ENCODE measurements at regions of chr18 and their contacts with region 1.

Region 1: GRCh38 chr18:48767090-48767690 is 183.6 kb downstream of the SMAD7 start:
- DNase-seq: peak; percentile 71 to 91
- ATAC-seq: peak; percentile 76 to 82
- H3K4me3 ChIP-seq: no peak overlapping the region
- H3K27ac ChIP-seq: peak overlapping the region; percentile 78 to 91 (median 88)
- H3K4me1 ChIP-seq: peaks cover 63 to 87% of the 10 kb centered on the region in 2 donors
- H3K27me3 ChIP-seq: no peaks in the 10 kb centered on the region
- CTCF ChIP-seq: no peak
- POLR2A ChIP-seq: peak; percentile 59 to 60

Region 2: DNA sequence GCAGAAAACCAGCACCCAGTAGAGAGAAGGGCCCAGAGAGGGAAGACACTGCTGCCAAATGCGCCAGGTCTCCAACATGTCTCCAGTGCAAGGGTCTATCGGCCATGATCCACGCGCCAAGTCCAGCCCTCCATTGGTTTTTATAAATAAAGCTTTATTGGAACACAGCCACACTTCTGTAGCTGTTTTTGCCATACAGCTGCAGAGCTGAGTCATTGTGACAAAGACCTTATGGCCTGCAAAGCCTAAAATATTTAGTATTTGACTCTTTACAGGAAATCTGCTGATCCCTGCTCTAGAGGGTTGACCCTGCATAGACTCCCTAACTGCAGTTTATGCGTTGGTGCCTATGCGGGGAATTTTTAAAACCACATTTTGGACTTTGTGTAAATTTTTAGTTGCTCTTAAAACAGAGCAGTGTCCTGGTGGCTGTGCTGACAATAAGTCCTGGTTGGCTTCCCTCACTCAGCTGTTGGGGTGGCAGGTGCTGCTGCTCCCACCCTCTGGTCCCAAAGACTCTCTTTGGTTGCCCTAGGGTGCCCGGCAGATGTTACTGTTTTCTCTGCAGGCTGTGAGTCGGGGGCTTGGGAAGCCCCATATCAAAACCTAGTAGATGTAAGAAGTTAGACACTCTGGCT is 73.4 kb before region 1 on chr18:
- in situ Hi-C with region 1: no loop called
- intact Hi-C with region 1: loop called (anchors 10 kb)
- DNase-seq: no peak
- ATAC-seq: peak; percentile 22 to 38
- H3K4me3 ChIP-seq: no peak overlapping the region
- H3K27ac ChIP-seq: peak overlapping the region; percentile 72 to 79 (median 74)
- H3K4me1 ChIP-seq: peaks cover 29 to 35% of the 10 kb centered on the region in 2 donors
- H3K27me3 ChIP-seq: no peaks in the 10 kb centered on the region
- CTCF ChIP-seq: no peak
- POLR2A ChIP-seq: no peak

Region 3: DNA sequence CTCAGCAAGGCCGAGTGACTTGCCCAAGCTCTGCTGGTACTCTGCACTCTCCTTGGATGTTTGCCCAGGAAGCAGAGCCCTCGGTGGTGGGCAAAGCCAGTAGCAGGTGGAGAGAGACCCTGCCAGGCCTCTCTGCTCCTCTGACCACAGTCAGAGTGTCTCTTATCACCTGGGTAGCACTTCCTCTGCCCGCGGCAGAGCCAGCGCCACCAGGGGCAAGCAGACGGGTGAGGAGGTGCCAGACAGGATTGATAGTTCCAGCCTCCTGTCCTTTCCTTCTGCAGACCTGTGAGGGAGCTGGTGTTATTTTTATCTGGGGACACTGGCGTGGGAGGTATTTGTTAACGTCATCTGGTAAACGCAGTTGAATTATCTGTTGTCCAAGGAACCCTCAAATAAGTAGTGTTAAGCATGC is 30.7 kb after region 1 on chr18:
- in situ Hi-C with region 1: no loop called
- intact Hi-C with region 1: loop called (anchors 2 kb)
- DNase-seq: peak; percentile 25 to 77
- ATAC-seq: peak; percentile 61 to 69
- H3K4me3 ChIP-seq: no peak overlapping the region
- H3K27ac ChIP-seq: peak overlapping the region; percentile 54 to 91 (median 80)
- H3K4me1 ChIP-seq: peaks cover 34 to 36% of the 10 kb centered on the region in 2 donors
- H3K27me3 ChIP-seq: no peaks in the 10 kb centered on the region
- CTCF ChIP-seq: no peak
- POLR2A ChIP-seq: peak in 1 of 2 donors; percentile 25

Region 4: DNA sequence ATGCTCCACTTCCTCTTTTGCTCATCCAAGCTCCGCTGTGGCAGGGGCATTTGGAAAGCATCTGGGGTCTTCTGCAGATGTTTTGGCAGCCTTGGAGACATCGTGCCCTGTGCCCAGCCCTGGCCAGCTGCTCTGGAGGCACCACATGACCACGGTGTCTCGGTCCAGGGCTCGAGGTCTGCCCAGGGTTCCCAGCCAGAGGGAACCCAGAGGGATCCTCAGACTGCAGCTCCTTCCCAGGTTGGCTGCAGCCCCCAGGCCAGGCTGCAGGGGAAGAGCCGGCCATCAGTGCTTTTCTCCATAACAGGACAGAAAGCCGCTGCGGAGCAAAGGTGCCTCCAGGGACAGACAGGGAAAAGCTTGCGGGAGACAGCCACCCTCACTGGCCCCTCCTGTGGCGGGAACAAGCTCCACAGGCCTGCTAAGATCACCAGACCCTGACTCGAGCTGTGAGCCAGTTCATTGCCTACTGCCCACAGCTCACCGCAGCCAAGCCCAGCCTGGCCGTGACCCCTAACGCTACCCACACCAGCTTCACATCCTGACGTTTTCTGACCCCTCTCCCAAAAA is 108.8 kb after region 1 on chr18:
- in situ Hi-C with region 1: no loop called
- intact Hi-C with region 1: no loop called
- DNase-seq: no peak
- ATAC-seq: no peak
- H3K4me3 ChIP-seq: no peak overlapping the region
- H3K27ac ChIP-seq: no peak overlapping the region
- H3K4me1 ChIP-seq: no peaks in the 10 kb centered on the region
- H3K27me3 ChIP-seq: no peaks in the 10 kb centered on the region
- CTCF ChIP-seq: peak in 1 of 5 experiments; percentile 12
- POLR2A ChIP-seq: no peak

Region 5: DNA sequence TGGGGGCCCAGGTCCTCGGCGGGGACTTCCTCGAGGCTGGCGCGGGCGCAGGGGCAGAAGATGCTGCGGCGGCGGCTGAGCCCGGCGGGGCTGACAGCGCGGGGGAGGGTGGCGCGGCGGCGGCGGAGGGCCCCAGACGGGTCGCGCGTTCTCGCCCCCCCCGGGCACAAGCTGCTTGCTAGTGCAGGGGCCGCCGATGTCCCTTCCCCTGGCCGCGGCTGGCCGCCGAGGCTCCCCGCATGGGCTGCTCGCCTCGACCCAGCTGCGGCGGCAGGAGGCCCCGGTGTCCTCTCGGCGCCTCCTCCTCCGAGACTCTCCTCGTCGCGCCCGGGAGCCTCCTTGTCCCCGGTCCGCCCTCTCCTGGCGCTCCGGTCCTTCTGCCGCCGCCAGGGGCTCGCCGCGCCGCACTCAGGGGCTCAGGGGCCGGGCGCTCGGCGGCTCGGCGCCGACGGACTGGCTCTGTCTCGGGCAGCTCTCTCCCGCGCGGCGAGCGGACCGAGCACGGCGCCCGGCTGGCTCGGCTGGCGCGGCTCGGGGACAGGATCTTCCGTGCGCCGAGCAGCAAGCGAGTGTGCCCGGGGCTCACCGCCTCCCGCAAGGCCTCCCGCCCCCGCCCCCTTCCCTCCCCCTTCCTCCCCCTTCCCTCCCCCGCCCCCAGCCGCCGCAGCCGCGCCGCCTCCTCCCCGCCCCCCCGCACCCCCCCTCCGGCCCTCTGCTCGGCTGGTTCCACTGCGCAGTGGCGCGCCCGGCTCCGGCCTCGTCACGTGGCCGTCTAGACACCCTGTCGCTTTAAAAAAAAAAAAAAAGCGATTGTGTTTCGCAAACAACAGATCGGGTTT is 184.5 kb after region 1 on chr18:
- in situ Hi-C with region 1: no loop called
- intact Hi-C with region 1: loop called (anchors 2 kb)
- DNase-seq: peak; percentile 80 to 90
- ATAC-seq: peak; percentile 55 to 60
- H3K4me3 ChIP-seq: peak overlapping the region; percentile 71 to 89 (median 82)
- H3K27ac ChIP-seq: peak overlapping the region; percentile 93 to 100 (median 94)
- H3K4me1 ChIP-seq: peaks cover 44 to 51% of the 10 kb centered on the region in 2 donors
- H3K27me3 ChIP-seq: no peaks in the 10 kb centered on the region
- CTCF ChIP-seq: peak in 3 of 5 experiments; percentile 33 to 37 (median 37)
- POLR2A ChIP-seq: peak; percentile 91 to 93

Region 6: DNA sequence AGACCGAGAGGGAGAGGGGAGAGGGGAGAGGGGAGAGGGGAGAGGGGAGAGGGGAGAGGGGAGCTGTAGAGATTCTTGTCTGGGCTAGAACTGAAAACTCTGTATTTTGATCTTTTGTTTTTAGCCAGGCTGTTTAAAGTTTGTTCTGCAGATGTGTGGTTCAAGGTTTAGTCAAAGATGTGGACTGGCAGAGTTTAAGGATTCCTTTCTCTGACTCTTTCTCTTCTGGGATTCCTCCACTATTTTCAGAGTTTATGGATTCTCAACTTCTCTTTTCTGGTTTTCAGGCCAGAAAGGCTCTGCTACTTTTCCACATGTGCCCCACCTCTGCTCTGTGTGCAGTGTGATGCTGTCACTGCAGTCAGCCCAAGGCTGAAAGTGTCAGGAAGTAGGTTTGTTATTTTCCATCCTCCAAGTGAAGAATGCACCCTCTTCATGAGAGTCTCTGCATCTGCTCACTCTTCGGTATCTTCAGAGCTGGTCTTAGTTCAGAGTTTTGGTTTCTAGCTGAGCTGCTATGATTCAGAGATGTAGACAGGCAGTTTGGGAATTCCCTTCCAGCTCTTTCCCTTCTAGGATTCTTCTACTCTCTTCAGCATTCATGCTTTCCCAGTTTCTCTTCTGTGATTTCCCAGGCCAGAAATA is 314.4 kb after region 1 on chr18:
- in situ Hi-C with region 1: no loop called
- intact Hi-C with region 1: no loop called
- DNase-seq: no peak
- ATAC-seq: no peak
- H3K4me3 ChIP-seq: no peak overlapping the region
- H3K27ac ChIP-seq: no peak overlapping the region
- H3K4me1 ChIP-seq: no peaks in the 10 kb centered on the region
- H3K27me3 ChIP-seq: no peaks in the 10 kb centered on the region
- CTCF ChIP-seq: no peak
- POLR2A ChIP-seq: no peak

Region 7: GRCh38 chr18:49342690-49343089 is 575.5 kb after region 1 on chr18:
- in situ Hi-C with region 1: no loop called
- intact Hi-C with region 1: no loop called
- DNase-seq: no peak
- ATAC-seq: no peak
- H3K4me3 ChIP-seq: no peak overlapping the region
- H3K27ac ChIP-seq: no peak overlapping the region
- H3K4me1 ChIP-seq: peaks cover 2 to 8% of the 10 kb centered on the region in 2 donors
- H3K27me3 ChIP-seq: no peaks in the 10 kb centered on the region
- CTCF ChIP-seq: no peak
- POLR2A ChIP-seq: no peak

Measured in gastrocnemius medialis (tissue), 4 donors.